ENCODE measurements at regions of chr16 and their contacts with region 1.

Region 1: GRCh38 chr16:88941913-88942909 is 34.8 kb downstream of the CBFA2T3 start:
- DNase-seq: peak in 1 of 7 donors; percentile 68
- H3K4me3 ChIP-seq: peak overlapping the region in 1 of 4 donors; percentile 66
- H3K27ac ChIP-seq: no peak overlapping the region
- H3K4me1 ChIP-seq: peaks cover 4 to 19% of the 10 kb centered on the region in 2 donors
- H3K27me3 ChIP-seq: peaks cover 17% of the 10 kb centered on the region
- CTCF ChIP-seq: peak in 5 of 6 experiments; percentile 9 to 78 (median 59)
- POLR2A ChIP-seq: no peak

Region 2: DNA sequence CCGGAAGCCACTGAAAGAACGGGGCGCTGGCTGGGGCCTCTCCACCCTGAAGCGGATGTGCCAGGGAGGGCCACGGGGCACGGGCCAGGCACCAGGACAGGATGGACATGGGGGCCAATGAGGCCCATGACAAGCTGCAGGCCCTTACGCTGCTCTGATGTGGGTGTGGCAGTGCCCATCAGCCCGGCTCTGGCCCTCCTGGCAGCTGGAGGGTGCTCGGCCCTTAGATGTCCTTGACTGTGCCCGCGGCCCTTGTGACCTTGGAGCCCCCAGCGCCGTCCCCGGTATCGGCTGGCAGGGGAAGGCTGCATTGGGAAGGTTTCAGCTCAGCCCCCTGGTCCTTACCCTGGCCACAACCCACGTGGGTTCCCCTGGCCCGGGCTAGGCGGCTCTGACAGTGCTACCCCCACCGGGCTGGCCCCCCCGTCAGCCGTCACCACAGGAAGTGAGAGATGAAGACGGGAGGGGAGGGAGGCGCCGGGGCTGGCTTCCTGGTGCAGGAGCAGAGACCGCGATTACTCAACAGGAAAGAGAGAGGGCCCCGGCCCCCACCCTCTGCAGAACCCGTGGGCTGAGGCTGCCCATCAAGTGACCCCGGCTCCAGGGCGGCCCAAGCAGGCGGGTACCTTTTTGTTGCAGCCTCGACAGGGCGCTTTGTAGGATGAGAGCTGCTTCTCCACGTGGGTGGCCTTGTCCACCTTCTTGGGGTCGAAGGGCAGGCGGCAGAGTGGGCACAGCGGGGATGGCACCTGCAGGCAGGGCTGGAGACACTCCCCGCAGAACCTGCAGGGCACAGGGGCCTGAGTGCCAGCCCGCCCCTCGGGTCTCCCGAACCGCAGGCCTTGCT is 241.4 kb before region 1 on chr16:
- intact Hi-C with region 1: no loop called
- DNase-seq: peak; percentile 82 to 97 (median 95)
- H3K4me3 ChIP-seq: no peak overlapping the region
- H3K27ac ChIP-seq: peak overlapping the region in 4 of 5 donors; percentile 49 to 77 (median 66)
- H3K4me1 ChIP-seq: peaks cover 23 to 42% of the 10 kb centered on the region in 2 donors
- H3K27me3 ChIP-seq: no peaks in the 10 kb centered on the region
- CTCF ChIP-seq: no peak
- POLR2A ChIP-seq: no peak

Region 3: DNA sequence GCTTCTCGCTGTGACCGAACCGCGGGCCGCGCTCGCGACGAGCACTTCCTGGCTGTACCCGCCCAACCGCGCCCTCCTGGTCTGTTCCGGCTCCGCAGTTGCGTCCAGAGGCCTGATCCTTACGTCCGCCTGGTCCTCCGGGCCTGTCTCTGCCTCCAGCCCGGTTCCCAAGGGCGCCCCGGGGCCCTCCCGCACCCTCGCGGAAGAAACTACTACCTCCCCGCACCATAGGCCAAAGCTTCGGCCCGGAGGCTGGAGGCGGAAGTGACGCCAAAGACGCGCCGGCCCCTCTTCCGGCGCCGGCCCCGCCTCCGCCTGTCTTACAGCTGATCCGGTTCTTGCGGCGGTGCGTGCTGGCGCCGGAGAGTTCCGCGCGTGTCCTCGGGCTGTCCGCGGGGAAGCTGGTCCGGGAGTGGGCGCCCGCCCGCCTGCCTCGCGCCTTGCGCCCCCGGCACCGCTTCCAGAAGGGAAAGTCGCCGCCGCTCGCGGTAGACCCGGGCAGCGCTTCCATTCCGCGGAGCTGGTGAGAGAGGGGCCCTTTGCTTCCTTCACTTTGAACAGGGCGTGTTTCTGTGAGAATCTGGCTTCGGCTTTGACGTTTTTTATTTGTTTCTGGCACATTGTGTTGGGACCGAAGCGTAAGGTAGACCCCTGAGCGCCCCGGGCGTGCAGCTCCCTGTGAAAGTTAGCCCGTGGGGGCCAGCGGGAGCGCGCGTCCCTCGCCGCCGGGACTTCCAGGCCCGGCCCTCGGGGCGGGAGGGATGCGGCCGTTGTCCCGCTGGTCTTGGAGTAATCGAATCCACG is 275.4 kb after region 1 on chr16 and contains the start of gene ZNF778:
- intact Hi-C with region 1: loop called in 1 of 2 experiments (anchors 5 kb)
- DNase-seq: peak; percentile 81 to 90 (median 84)
- H3K4me3 ChIP-seq: peak within 1 kb of the TSS; percentile 24 to 92 (median 80)
- H3K27ac ChIP-seq: peak within 1 kb of the TSS; percentile 77 to 99 (median 95)
- H3K4me1 ChIP-seq: peaks cover 18 to 29% of the 10 kb centered on the region in 2 donors
- H3K27me3 ChIP-seq: no peaks in the 10 kb centered on the region
- CTCF ChIP-seq: peak in 2 of 6 experiments; percentile 26 to 28
- POLR2A ChIP-seq: peak; percentile 64 to 90
- total RNA-seq, gene ZNF778: 3.5 to 20.5 (median 9.8) TPM